ENCODE measurements at regions of chr7 and their contacts with region 1.

Region 1: GRCh38 chr7:155298834-155299534 is 1.3 kb downstream of the INSIG1 start:
- DNase-seq: peak; percentile 94
- H3K4me3 ChIP-seq: peak overlapping the region; percentile 93
- H3K27ac ChIP-seq: peak overlapping the region; percentile 90
- H3K4me1 ChIP-seq: peaks cover 24% of the 10 kb centered on the region
- H3K27me3 ChIP-seq: no peaks in the 10 kb centered on the region
- CTCF ChIP-seq: no peak

Region 2: DNA sequence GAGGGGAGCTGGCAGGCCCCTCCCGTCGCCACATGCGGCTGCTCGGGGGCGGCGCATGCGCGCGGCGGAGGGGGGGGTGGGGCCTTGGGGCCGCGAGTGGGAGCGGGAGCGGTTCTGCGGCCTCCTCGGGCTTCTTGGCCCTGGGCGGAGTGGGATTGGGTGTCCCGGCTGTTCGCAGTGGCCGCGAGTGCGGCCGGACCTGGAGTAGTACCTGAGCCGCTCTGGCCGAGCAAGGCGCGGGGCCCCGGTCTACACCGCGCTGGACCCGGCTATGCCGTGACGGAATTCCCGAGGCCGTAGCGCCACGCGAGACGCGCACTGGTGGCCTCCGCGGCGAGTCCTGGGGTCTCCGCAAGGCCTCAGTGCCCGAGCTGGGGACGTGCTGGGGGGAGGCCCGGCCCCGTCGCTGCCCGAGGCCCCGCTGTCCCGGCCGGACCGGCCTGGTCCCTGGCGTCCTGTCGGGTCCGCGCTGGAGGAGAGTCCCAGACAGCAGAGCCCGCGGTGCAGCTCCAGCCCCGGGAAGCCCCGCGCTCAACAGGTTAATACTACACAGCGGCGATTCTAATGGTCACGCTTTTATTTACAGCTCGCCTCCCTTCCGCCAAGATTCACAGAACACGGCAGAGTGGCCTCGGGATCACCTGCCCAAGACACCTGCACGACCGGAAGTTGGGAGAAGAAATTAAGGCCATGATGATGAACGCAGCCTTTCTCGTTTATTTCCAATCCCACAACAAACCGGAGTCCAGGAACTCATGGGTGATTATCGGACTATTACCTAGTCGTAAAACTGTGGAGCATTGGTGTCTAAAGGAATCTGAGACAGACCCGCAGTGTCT is 295.4 kb before region 1 on chr7:
- CTCF ChIA-PET with region 1: no interaction called
- POLR2A ChIA-PET with region 1: no interaction called
- intact Hi-C with region 1: loop called (anchors 5 kb)
- DNase-seq: peak; percentile 89
- H3K4me3 ChIP-seq: peak overlapping the region; percentile 87
- H3K27ac ChIP-seq: peak overlapping the region; percentile 99
- H3K4me1 ChIP-seq: peaks cover 4% of the 10 kb centered on the region
- H3K27me3 ChIP-seq: no peaks in the 10 kb centered on the region
- CTCF ChIP-seq: no peak

Measured in A673 (cell line).